PC-3 (cell line): ENCODE measurements at regions of chr10 and their contacts with region 1.

Region 1: GRCh38 chr10:35916791-35917190 is 274.7 kb upstream of the FZD8 start:
- DNase-seq: peak; percentile 64
- ATAC-seq: peak; percentile 21
- H3K4me3 ChIP-seq: no peak overlapping the region
- H3K27ac ChIP-seq: no peak overlapping the region
- H3K4me1 ChIP-seq: peaks cover 22% of the 10 kb centered on the region
- H3K27me3 ChIP-seq: no peaks in the 10 kb centered on the region
- CTCF ChIP-seq: peak; percentile 68

Region 2: DNA sequence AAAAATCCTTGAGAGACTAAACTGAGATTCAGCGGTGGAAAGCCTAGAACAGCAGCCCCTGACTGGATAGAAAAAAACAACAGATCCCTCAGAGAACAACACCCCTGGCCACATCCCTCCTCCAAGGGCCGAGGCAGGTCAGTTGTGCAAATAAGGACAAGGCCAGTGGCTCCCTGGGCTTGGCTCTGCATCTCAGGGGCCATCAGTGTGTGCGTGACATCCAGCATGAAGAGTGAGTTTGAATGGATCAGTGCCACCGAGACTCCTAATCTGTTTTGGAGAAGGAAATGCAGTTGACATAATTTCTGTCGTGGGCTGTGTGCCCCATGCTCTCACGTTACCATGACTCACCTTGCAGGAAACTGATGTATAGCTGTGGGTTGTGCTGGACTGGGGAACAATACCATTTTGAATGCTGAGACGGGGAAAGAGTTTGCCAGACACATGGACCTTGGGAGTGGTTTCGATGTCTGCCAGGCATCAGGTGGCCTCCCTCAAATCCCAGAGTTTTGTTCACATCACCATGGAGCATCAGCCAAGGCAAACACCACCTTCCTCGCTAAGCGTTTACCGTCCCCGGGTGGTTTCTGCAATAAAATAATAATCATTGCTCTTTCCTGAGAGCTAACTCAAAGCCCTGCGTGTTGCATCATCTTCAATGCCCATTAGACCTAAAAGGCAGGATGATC is 121.5 kb before region 1 on chr10:
- CTCF ChIA-PET with region 1: no interaction called
- POLR2A ChIA-PET with region 1: no interaction called
- intact Hi-C with region 1: loop called (anchors 2 kb)
- DNase-seq: peak; percentile 100
- ATAC-seq: peak; percentile 94
- H3K4me3 ChIP-seq: peak overlapping the region; percentile 12
- H3K27ac ChIP-seq: peak overlapping the region; percentile 80
- H3K4me1 ChIP-seq: peaks cover 46% of the 10 kb centered on the region
- H3K27me3 ChIP-seq: no peaks in the 10 kb centered on the region
- CTCF ChIP-seq: no peak

Region 3: GRCh38 chr10:36023939-36024338 is 107.1 kb after region 1 on chr10:
- CTCF ChIA-PET with region 1: no interaction called
- POLR2A ChIA-PET with region 1: no interaction called
- intact Hi-C with region 1: loop called (anchors 1 kb)
- DNase-seq: peak; percentile 100
- ATAC-seq: peak; percentile 98
- H3K4me3 ChIP-seq: no peak overlapping the region
- H3K27ac ChIP-seq: peak overlapping the region; percentile 69
- H3K4me1 ChIP-seq: peaks cover 15% of the 10 kb centered on the region
- H3K27me3 ChIP-seq: no peaks in the 10 kb centered on the region
- CTCF ChIP-seq: no peak

Region 4: GRCh38 chr10:36324831-36325387 is 408.1 kb after region 1 on chr10:
- CTCF ChIA-PET with region 1: no interaction called
- POLR2A ChIA-PET with region 1: no interaction called
- intact Hi-C with region 1: loop called (anchors 5 kb)
- DNase-seq: peak; percentile 89
- ATAC-seq: peak; percentile 88
- H3K4me3 ChIP-seq: no peak overlapping the region
- H3K27ac ChIP-seq: peak overlapping the region; percentile 57
- H3K4me1 ChIP-seq: peaks cover 18% of the 10 kb centered on the region
- H3K27me3 ChIP-seq: no peaks in the 10 kb centered on the region
- CTCF ChIP-seq: no peak

Region 5: DNA sequence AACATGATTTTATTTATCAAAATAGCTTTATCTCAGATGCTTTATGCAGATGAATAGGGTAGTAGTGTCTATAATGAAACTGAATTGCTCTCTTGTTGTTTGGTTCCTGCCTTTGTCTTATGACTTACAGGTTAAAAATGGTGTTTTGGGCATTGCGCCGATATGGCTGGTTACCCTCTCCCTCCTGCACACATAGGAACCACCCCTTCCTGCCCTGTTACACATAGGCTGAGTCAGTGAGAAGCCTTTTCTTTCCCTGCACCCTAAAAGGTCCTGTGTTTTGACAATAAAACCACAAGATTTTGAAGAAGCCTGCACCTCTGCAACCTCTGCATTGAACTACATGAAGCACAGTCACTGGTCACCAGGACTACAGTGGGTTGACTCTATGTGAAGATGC is 552.8 kb after region 1 on chr10:
- CTCF ChIA-PET with region 1: no interaction called
- POLR2A ChIA-PET with region 1: no interaction called
- intact Hi-C with region 1: loop called (anchors 5 kb)
- DNase-seq: peak; percentile 96
- ATAC-seq: peak; percentile 79
- H3K4me3 ChIP-seq: no peak overlapping the region
- H3K27ac ChIP-seq: peak overlapping the region; percentile 58
- H3K4me1 ChIP-seq: peaks cover 39% of the 10 kb centered on the region
- H3K27me3 ChIP-seq: no peaks in the 10 kb centered on the region
- CTCF ChIP-seq: no peak